ENCODE measurements at regions of chr3 and their contacts with region 1.

Region 1: DNA sequence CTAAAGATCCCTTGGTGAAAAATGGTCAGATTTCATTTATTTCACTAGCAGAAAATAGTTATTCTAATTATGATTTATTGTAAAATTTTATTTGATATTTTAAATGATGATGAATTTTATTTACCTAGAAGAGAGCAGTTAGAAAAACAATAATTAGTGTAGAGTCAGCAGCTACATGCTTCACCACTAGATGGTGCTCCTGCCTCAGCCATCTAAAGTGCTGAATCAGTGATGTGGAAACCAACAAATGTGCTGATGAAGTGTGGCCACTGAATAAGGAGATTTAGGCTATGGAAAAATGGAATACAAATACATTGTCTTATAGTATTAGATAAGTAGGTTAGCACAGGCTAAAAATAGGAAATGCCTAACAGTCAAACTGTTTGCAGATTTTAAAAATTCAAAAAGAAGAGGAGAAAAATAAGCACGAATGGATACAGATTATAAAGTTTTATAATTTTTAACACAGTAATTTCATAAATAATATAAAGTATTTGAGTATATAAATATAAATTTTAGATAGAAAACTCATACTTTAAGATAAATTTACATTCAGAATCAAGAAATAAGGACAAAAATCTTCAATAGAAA is 109.8 kb downstream of the PPP2R3A start:
- DNase-seq: peak; percentile 83
- H3K4me3 ChIP-seq: no peak overlapping the region
- H3K27ac ChIP-seq: no peak overlapping the region
- H3K4me1 ChIP-seq: peaks cover 11% of the 10 kb centered on the region
- H3K27me3 ChIP-seq: no peaks in the 10 kb centered on the region
- CTCF ChIP-seq: peak; percentile 95

Region 2: DNA sequence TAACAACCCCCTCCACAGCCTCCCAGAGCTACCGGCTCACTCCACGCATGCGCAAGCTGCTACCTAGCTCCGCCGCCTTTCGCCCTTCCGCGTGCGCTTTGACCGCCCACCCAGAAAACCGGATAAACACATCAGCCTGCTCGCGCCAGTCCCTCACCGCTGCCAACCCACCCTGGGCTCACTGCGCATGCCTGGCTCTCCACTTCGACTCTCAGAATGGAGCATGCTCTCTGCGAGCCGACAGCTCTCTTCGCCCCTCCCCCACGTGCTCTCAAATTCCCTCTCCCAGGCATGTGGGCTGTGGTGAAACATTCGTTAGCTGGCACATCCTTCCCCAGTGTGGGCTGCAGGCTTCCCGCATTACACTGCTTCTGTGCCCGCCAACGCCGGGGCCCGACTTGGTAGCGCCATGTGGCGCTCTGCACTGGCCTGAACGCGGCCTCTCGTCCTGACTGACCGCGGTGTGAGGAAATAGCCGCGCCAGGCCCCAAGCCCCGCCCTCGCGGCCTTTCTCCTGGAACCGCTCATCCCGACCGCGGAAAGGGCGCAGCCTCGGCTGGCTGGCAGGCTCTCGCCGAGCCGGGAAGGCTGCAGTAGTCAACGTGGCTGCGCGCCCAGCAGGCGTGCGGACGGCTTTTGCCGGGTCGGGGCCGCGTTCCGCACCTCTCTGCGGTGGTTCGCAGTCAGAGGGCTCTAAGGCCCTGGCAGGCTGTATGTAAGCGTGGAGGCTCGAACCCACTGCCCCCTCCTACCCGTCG is 121.3 kb after region 1 on chr3:
- CTCF ChIA-PET with region 1: interaction called, 3 read pairs
- POLR2A ChIA-PET with region 1: no interaction called
- intact Hi-C with region 1: loop called (anchors 5 kb)
- DNase-seq: peak; percentile 100
- H3K4me3 ChIP-seq: peak overlapping the region; percentile 92
- H3K27ac ChIP-seq: peak overlapping the region; percentile 98
- H3K4me1 ChIP-seq: peaks cover 27% of the 10 kb centered on the region
- H3K27me3 ChIP-seq: no peaks in the 10 kb centered on the region
- CTCF ChIP-seq: no peak

Region 3: GRCh38 chr3:136250226-136250902 is 175.1 kb after region 1 on chr3 and contains the start of gene PCCB:
- CTCF ChIA-PET with region 1: interaction called, 3 read pairs
- POLR2A ChIA-PET with region 1: no interaction called
- intact Hi-C with region 1: loop called (anchors 5 kb)
- DNase-seq: peak; percentile 95
- H3K4me3 ChIP-seq: peak within 1 kb of the TSS; percentile 57
- H3K27ac ChIP-seq: peak within 1 kb of the TSS; percentile 86
- H3K4me1 ChIP-seq: peaks cover 5% of the 10 kb centered on the region
- H3K27me3 ChIP-seq: no peaks in the 10 kb centered on the region
- CTCF ChIP-seq: peak; percentile 77
- total RNA-seq, gene PCCB: 82.1 and 94.6 TPM in 2 replicates

Region 4: GRCh38 chr3:136390574-136390973 is 315.3 kb after region 1 on chr3:
- CTCF ChIA-PET with region 1: interaction called, 3 read pairs
- POLR2A ChIA-PET with region 1: no interaction called
- intact Hi-C with region 1: loop called (anchors 5 kb)
- DNase-seq: no peak
- H3K4me3 ChIP-seq: no peak overlapping the region
- H3K27ac ChIP-seq: no peak overlapping the region
- H3K4me1 ChIP-seq: no peaks in the 10 kb centered on the region
- H3K27me3 ChIP-seq: no peaks in the 10 kb centered on the region
- CTCF ChIP-seq: no peak

Region 5: GRCh38 chr3:137013955-137014688 is 938.8 kb after region 1 on chr3:
- CTCF ChIA-PET with region 1: interaction called, 11 read pairs
- POLR2A ChIA-PET with region 1: no interaction called
- intact Hi-C with region 1: loop called (anchors 1 kb)
- DNase-seq: peak; percentile 93
- H3K4me3 ChIP-seq: peak overlapping the region; percentile 46
- H3K27ac ChIP-seq: peak overlapping the region; percentile 1
- H3K4me1 ChIP-seq: peaks cover 10% of the 10 kb centered on the region
- H3K27me3 ChIP-seq: no peaks in the 10 kb centered on the region
- CTCF ChIP-seq: peak; percentile 87

Region 6: DNA sequence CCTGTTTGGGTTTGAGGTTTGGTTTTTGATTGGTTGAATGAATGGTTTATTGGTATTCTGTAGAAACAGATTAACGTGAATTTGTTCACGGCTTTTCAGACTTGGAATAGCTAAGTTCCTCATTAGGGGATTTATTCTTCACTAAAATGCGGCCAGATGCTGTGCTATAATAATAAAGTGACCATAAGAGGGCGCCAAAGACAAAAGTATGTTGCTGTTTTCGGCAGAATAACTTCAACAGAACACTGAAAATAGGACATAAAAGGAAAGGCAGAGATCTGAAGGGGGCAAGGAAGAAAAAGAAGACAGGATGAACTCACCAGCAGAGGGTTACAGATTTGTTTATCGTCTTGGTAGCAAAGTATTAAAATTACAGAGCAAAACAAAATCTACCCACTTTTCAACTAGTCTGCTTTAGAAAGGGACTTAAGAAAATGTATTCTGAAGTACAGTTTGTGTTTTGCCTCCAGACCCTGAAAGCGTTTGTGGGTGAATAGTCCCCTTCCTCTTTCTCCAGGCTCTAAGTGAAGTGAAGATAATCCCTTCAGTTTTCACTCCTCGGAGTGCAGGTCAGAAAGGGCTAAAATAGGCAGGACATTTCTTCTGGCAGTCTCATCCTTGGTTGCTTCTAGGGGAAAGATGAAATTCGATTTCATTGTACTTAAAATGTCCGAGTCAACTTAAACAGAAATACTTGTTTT is 1030.1 kb after region 1 on chr3:
- CTCF ChIA-PET with region 1: no interaction called
- POLR2A ChIA-PET with region 1: no interaction called
- intact Hi-C with region 1: loop called (anchors 10 kb)
- DNase-seq: peak; percentile 77
- H3K4me3 ChIP-seq: no peak overlapping the region
- H3K27ac ChIP-seq: no peak overlapping the region
- H3K4me1 ChIP-seq: no peaks in the 10 kb centered on the region
- H3K27me3 ChIP-seq: peaks cover 45% of the 10 kb centered on the region
- CTCF ChIP-seq: peak; percentile 86